ENCODE measurements at regions of chr5 and their contacts with region 1.

Region 1: GRCh38 chr5:39283231-39283818 is 64.0 kb upstream of the FYB1 start:
- DNase-seq: peak; percentile 68 to 83 (median 77)
- H3K4me3 ChIP-seq: no peak overlapping the region
- H3K4me3 Mint-ChIP-seq: peak overlapping the region in 1 of 2 donors; percentile 19
- H3K27ac ChIP-seq: no peak overlapping the region
- H3K27ac Mint-ChIP-seq: peak overlapping the region in 4 of 7 donors; percentile 57 to 74 (median 66)
- H3K4me1 ChIP-seq: peaks cover 4 to 11% of the 10 kb centered on the region in 2 donors
- H3K4me1 Mint-ChIP-seq: peaks cover 16% of the 10 kb centered on the region
- H3K27me3 ChIP-seq: no peaks in the 10 kb centered on the region
- H3K27me3 Mint-ChIP-seq: no peaks in the 10 kb centered on the region
- CTCF ChIP-seq: peak; percentile 86

Region 2: GRCh38 chr5:39148983-39149534 is 134.3 kb before region 1 on chr5:
- intact Hi-C with region 1: loop called (anchors 5 to 10 kb)
- DNase-seq: no peak
- H3K4me3 ChIP-seq: no peak overlapping the region
- H3K4me3 Mint-ChIP-seq: no peak overlapping the region
- H3K27ac ChIP-seq: peak overlapping the region in 1 of 2 donors; percentile 60
- H3K27ac Mint-ChIP-seq: peak overlapping the region; percentile 63 to 83 (median 81)
- H3K4me1 ChIP-seq: peaks cover 50 to 59% of the 10 kb centered on the region in 2 donors
- H3K4me1 Mint-ChIP-seq: peaks cover 57% of the 10 kb centered on the region
- H3K27me3 ChIP-seq: no peaks in the 10 kb centered on the region
- H3K27me3 Mint-ChIP-seq: peaks cover 0 to 3% (median 2%) of the 10 kb centered on the region in 3 donors
- CTCF ChIP-seq: peak; percentile 64

Region 3: GRCh38 chr5:39217365-39218281 is 65.7 kb before region 1 on chr5:
- intact Hi-C with region 1: loop called (anchors 2 to 5 kb)
- DNase-seq: peak; percentile 60 to 83 (median 72)
- H3K4me3 ChIP-seq: peak overlapping the region; percentile 69 to 88 (median 81)
- H3K4me3 Mint-ChIP-seq: peak overlapping the region; percentile 77 to 98
- H3K27ac ChIP-seq: peak overlapping the region in 1 of 2 donors; percentile 86
- H3K27ac Mint-ChIP-seq: peak overlapping the region; percentile 29 to 91 (median 82)
- H3K4me1 ChIP-seq: peaks cover 85 to 87% of the 10 kb centered on the region in 2 donors
- H3K4me1 Mint-ChIP-seq: peaks cover 81% of the 10 kb centered on the region
- H3K27me3 ChIP-seq: no peaks in the 10 kb centered on the region
- H3K27me3 Mint-ChIP-seq: peaks cover 0 to 1% (median 0%) of the 10 kb centered on the region in 3 donors
- CTCF ChIP-seq: peak; percentile 98

Measured in CD14-positive monocyte (primary cell).